IMR-90 (cell line): ENCODE measurements at regions of chr9 and their contacts with region 1.

Region 1: GRCh38 chr9:105046907-105047741 is 119.2 kb upstream of the ABCA1 start:
- DNase-seq: no peak
- ATAC-seq: no peak
- H3K4me3 ChIP-seq: no peak overlapping the region
- H3K27ac ChIP-seq: no peak overlapping the region
- H3K4me1 ChIP-seq: peaks cover 4% of the 10 kb centered on the region; the same call in 1 of the 2 replicates
- H3K27me3 ChIP-seq: no peaks in the 10 kb centered on the region
- CTCF ChIP-seq: no peak
- POLR2A ChIP-seq: no peak
- RAD21 ChIP-seq: no peak

Region 2: GRCh38 chr9:104879555-104880309 is 167.4 kb before region 1 on chr9:
- CTCF ChIA-PET with region 1: no interaction called
- POLR2A ChIA-PET with region 1: no interaction called
- dilution Hi-C with region 1: no loop called
- in situ Hi-C with region 1: no loop called
- intact Hi-C with region 1: no loop called
- DNase-seq: peak; percentile 88
- ATAC-seq: peak; percentile 72
- H3K4me3 ChIP-seq: no peak overlapping the region
- H3K27ac ChIP-seq: peak overlapping the region; percentile 26
- H3K4me1 ChIP-seq: 0 out of 2 replicates have a peak, but pooled peaks cover 4% of the 10 kb centered on the region
- H3K27me3 ChIP-seq: no peaks in the 10 kb centered on the region
- CTCF ChIP-seq: no peak
- POLR2A ChIP-seq: no peak
- RAD21 ChIP-seq: no peak

Region 3: DNA sequence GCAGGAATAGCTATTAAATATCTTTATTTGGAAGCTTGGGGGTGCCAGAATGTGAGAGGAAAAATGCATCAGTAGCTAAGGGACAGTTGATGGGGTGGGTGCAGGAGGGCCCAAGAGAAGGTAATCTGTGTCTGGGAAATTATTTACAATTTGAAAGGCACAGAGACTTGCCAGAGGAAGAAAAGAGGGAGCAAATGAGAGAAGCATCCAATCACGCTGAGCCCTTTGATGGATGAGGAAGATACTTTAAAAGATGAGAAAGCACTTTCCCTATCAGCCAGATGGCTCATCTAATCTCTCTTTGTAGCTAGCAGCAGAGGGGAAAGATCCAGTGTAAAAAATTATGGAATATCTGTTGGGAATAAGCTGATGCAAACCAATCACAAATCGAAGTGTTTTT is 62.2 kb before region 1 on chr9:
- CTCF ChIA-PET with region 1: no interaction called
- POLR2A ChIA-PET with region 1: interaction called, 11 read pairs
- dilution Hi-C with region 1: no loop called
- in situ Hi-C with region 1: no loop called
- intact Hi-C with region 1: no loop called
- DNase-seq: no peak
- ATAC-seq: no peak
- H3K4me3 ChIP-seq: no peak overlapping the region
- H3K27ac ChIP-seq: no peak overlapping the region
- H3K4me1 ChIP-seq: peaks cover 2% of the 10 kb centered on the region; the same call in 1 of the 2 replicates
- H3K27me3 ChIP-seq: no peaks in the 10 kb centered on the region
- CTCF ChIP-seq: no peak
- POLR2A ChIP-seq: no peak
- RAD21 ChIP-seq: no peak

Region 4: GRCh38 chr9:105355781-105356180 is 308.7 kb after region 1 on chr9:
- CTCF ChIA-PET with region 1: no interaction called
- POLR2A ChIA-PET with region 1: no interaction called
- dilution Hi-C with region 1: no loop called
- in situ Hi-C with region 1: no loop called
- intact Hi-C with region 1: no loop called
- DNase-seq: peak; percentile 47
- ATAC-seq: no peak
- H3K4me3 ChIP-seq: no peak overlapping the region
- H3K27ac ChIP-seq: no peak overlapping the region
- H3K4me1 ChIP-seq: 0 out of 2 replicates have a peak, but pooled peaks cover 2% of the 10 kb centered on the region
- H3K27me3 ChIP-seq: no peaks in the 10 kb centered on the region
- CTCF ChIP-seq: no peak
- POLR2A ChIP-seq: no peak
- RAD21 ChIP-seq: no peak